ENCODE measurements at regions of chr13 and their contacts with region 1.

Region 1: DNA sequence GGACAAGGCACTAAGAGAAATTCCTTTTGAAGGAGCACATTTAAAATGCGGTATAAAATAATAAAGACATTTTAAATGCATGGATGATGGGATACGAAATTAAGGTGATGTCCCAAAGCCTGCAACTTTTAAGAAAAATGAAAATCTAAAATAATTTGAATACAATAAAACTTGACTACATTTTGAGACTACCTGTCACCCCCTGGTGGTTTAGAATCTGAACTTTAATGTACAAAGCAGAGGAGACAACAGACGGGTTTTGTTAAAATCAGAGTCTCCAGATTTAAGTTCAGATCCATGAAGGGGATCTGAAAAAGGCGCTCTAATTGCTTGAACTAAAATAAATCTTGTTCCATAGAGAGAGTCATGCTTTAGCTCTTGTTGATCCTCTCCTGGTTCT is 1129.3 kb upstream of the PCDH20 start:
- DNase-seq: peak in 1 of 2 experiments; percentile 10
- H3K4me3 ChIP-seq: no peak overlapping the region
- H3K4me3 Mint-ChIP-seq: no peak overlapping the region
- H3K27ac Mint-ChIP-seq: no peak overlapping the region
- H3K4me1 ChIP-seq: no peaks in the 10 kb centered on the region
- H3K4me1 Mint-ChIP-seq: no peaks in the 10 kb centered on the region
- H3K27me3 ChIP-seq: no peaks in the 10 kb centered on the region
- H3K27me3 Mint-ChIP-seq: no peaks in the 10 kb centered on the region
- CTCF ChIP-seq: peak in 1 of 2 experiments; percentile 15

Region 2: DNA sequence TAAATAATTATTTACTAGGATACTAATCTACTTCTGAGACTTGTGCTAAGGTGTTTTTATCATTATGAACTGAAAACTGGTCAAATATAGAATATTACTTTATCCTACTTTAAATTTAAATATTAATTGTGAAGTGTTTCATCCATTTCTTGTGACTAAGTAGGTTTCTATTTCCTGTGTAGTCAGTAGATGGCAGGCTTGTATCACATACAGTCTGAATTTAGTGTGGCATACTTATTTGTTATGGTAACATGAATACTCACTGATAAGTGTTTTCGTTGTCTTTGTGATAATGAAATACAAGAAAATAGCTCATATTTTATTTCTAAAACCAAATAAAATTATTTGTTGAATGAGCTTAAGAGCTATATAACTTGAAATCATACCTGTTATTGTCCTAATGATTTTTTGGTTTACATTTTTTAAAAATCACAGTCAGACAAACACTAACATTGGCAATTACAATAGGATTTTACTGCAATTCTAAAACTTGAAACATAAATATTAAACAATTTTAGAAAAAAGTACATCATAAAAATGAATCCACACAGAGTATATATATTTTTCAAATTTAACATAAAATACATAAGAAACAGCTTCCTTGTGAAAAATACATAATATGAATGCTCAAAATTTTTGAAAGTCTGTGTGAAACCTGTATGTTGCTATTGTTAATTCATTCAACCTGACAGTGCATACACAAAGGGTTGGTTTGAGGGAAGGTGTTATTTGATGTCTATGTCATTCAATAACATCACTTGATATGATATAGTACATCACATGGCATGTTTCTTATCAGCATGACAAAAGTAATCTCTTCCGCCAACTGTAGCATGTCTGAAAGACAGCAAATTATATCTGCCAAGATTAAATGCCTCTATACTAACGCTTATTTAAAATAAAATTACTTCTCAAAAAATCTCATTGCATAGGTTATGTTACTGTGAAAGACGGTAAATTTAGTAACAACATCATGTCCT is 224.5 kb before region 1 on chr13:
- CTCF ChIA-PET with region 1: no interaction called
- POLR2A ChIA-PET with region 1: no interaction called
- intact Hi-C with region 1: loop called (anchors 1 kb)
- DNase-seq: peak in 1 of 2 experiments; percentile 42
- H3K4me3 ChIP-seq: no peak overlapping the region
- H3K4me3 Mint-ChIP-seq: no peak overlapping the region
- H3K27ac Mint-ChIP-seq: no peak overlapping the region
- H3K4me1 ChIP-seq: no peaks in the 10 kb centered on the region
- H3K4me1 Mint-ChIP-seq: no peaks in the 10 kb centered on the region
- H3K27me3 ChIP-seq: no peaks in the 10 kb centered on the region
- H3K27me3 Mint-ChIP-seq: no peaks in the 10 kb centered on the region
- CTCF ChIP-seq: peak; percentile 62 to 66

Region 3: DNA sequence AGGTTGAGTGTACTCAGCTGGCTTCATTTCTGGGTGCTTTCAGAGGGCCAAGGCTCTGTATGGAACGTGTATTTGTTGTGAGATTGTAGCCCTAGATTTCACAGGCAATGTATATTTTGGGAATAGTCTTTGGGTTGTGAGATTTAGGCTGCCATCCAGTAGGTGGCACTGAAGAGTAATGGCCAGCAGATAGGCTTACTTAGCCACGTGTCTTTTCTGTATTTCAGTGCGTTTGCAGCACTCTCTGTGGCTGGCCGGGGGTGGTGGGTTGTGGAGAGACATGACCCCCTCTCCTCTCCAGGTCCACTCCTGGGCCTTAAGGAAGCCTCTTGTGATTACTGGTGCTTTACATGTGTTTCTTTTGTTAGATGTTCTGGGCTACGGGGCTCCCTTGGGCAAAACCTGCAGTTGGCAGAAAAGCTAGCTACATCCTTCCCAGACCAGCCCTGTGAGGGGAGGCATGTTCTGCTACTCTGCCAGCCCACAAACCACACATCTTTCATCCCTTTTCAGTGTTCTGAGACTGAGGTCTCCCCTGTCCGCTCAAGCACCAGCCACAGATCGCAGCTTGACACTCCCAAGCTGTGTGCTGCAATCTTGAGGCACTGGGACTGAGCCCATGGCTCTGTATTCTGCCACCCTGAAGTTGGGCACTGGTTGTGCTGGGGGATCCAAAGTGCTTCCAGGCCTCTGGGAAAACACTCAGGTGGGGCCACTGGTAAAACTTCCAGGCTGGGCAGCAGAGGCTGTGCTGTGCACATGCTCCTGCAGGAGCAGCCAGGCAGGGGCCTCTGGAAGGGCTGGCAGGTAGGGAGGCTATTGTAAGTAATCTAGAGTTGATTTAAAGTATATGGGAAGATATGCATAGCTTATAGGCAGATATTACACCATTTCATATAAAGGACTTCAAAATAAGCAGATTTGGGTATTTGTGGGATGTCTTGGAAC is 32.5 kb before region 1 on chr13:
- CTCF ChIA-PET with region 1: no interaction called
- POLR2A ChIA-PET with region 1: no interaction called
- intact Hi-C with region 1: loop called (anchors 1 kb)
- DNase-seq: peak; percentile 42 to 57
- H3K4me3 ChIP-seq: no peak overlapping the region
- H3K4me3 Mint-ChIP-seq: no peak overlapping the region
- H3K27ac Mint-ChIP-seq: no peak overlapping the region
- H3K4me1 ChIP-seq: no peaks in the 10 kb centered on the region
- H3K4me1 Mint-ChIP-seq: peaks cover 10% of the 10 kb centered on the region
- H3K27me3 ChIP-seq: no peaks in the 10 kb centered on the region
- H3K27me3 Mint-ChIP-seq: peaks cover 4% of the 10 kb centered on the region
- CTCF ChIP-seq: peak; percentile 76 to 84